CD8-positive, alpha-beta T cell (primary cell): ENCODE measurements at regions of chr1 and their contacts with region 1.

Region 1: DNA sequence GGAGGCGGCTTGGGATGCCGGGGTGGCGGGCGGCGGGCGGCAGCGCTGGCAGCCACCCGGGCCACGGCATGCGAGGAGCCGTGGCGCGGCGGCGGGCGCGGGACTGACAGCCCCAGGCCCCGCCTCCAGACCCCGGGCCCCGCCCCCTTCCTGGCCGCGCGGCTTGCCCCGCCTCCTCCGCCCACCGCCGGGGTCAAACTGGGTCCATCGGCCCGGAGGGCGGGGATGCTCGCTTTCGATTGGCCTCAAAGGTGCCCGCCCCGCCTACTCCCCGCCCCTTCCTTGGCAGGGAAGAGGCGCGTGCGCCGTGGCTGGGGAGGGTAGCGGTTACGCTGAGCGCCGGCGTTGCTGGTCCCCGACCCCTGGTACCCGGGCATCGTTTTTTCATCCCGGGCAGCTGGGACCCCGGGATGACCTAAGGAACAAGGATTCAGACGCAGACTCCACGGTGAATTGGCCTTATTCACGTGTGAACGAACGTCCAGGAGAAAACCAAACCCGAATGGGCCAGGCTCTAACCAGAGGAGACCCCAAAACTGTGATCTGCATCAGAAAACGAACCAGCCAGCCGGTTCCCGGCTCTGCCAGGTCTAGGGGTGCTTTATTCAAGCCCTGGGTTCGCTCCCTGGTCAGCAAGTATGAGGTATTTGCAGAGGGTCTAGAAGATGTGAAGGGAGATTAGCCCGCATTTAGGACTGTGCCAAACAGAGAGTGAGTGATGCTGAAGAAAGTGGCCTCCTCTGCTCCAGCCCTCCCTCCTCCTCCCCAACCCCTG is 117.2 kb upstream of the GUCA2B start:
- DNase-seq: peak; percentile 96 to 99 (median 98)
- ATAC-seq: peak; percentile 94
- H3K4me3 ChIP-seq: peak overlapping the region; percentile 55 to 79
- H3K4me3 Mint-ChIP-seq: peak overlapping the region; percentile 78
- H3K27ac ChIP-seq: peak overlapping the region in 1 of 2 experiments; percentile 51
- H3K27ac Mint-ChIP-seq: peak overlapping the region; percentile 75
- H3K4me1 ChIP-seq: peaks cover 29% of the 10 kb centered on the region
- H3K4me1 Mint-ChIP-seq: peaks cover 42% of the 10 kb centered on the region
- H3K27me3 ChIP-seq: no peaks in the 10 kb centered on the region
- H3K27me3 Mint-ChIP-seq: no peaks in the 10 kb centered on the region
- CTCF ChIP-seq: no peak

Region 2: DNA sequence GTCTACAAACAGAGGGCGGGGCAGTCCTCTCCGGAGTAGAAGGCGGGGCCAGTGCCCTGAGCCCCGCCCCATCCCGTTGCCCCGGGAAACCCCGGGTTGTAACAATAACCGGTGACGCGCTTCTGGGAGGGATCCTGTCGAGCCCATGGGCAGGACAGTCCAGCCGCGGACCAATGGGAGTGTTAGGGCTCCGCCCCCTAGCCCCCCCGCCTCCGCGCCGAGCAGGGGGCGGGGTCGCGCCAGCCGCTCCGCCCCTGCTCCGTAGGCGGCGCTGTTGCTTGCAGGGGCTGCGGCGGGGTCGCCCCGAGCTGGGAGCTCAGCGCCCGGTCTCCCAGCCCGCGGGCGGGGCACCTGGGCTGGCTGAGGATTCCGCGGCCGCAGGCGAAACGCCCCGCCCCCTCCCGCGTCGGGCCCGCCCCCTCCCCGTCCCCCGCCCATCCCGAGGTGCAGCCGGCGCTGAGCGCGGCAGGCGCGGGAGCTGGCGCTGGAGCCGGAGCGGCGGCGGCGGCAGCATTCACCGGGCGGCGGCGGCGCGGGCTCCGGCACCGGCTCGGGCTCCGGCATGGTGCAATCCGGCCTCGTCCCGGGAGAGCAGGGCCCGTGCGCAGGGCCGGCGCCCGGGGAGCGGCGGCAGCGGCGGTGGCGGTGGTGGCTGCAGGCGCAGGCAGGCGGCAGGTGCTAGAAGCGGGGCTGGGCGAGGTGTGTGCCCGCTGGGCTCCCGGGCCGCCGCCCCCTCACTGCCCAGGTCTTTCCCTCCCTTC is 674.8 kb before region 1 on chr1 and contains the start of gene FOXO6:
- CTCF ChIA-PET with region 1: no interaction called
- POLR2A ChIA-PET with region 1: no interaction called
- intact Hi-C with region 1: loop called in 1 of 2 experiments (anchors 2 kb)
- DNase-seq: peak; percentile 85 to 97 (median 94)
- ATAC-seq: peak; percentile 90
- H3K4me3 ChIP-seq: peak within 1 kb of the TSS; percentile 35 to 52
- H3K4me3 Mint-ChIP-seq: peak within 1 kb of the TSS; percentile 82
- H3K27ac ChIP-seq: peak within 1 kb of the TSS; percentile 14 to 25
- H3K27ac Mint-ChIP-seq: peak within 1 kb of the TSS; percentile 28
- H3K4me1 ChIP-seq: peaks cover 22% of the 10 kb centered on the region
- H3K4me1 Mint-ChIP-seq: peaks cover 23% of the 10 kb centered on the region
- H3K27me3 ChIP-seq: peaks cover 10 to 11% of the 10 kb centered on the region in 2 experiments
- H3K27me3 Mint-ChIP-seq: peaks cover 29% of the 10 kb centered on the region
- CTCF ChIP-seq: no peak
- total RNA-seq, gene FOXO6: 1.4 to 1.7 TPM

Region 3: GRCh38 chr1:41673378-41673777 is 362.6 kb before region 1 on chr1:
- CTCF ChIA-PET with region 1: no interaction called
- POLR2A ChIA-PET with region 1: no interaction called
- intact Hi-C with region 1: loop called in 1 of 2 experiments (anchors 5 kb)
- DNase-seq: peak; percentile 22 to 86 (median 55)
- ATAC-seq: peak; percentile 88
- H3K4me3 ChIP-seq: peak overlapping the region; percentile 2 to 30
- H3K4me3 Mint-ChIP-seq: peak overlapping the region; percentile 70
- H3K27ac ChIP-seq: peak overlapping the region; percentile 22 to 62
- H3K27ac Mint-ChIP-seq: peak overlapping the region; percentile 66
- H3K4me1 ChIP-seq: peaks cover 43% of the 10 kb centered on the region
- H3K4me1 Mint-ChIP-seq: peaks cover 66% of the 10 kb centered on the region
- H3K27me3 ChIP-seq: no peaks in the 10 kb centered on the region
- H3K27me3 Mint-ChIP-seq: no peaks in the 10 kb centered on the region
- CTCF ChIP-seq: no peak

Region 4: GRCh38 chr1:41919764-41920397 is 116.1 kb before region 1 on chr1:
- CTCF ChIA-PET with region 1: no interaction called
- POLR2A ChIA-PET with region 1: interaction called, 4 read pairs
- intact Hi-C with region 1: loop called (anchors 1 to 2 kb)
- DNase-seq: peak; percentile 39 to 90 (median 77)
- ATAC-seq: peak; percentile 81
- H3K4me3 ChIP-seq: peak overlapping the region; percentile 51 to 57
- H3K4me3 Mint-ChIP-seq: peak overlapping the region; percentile 95
- H3K27ac ChIP-seq: peak overlapping the region; percentile 56 to 74
- H3K27ac Mint-ChIP-seq: peak overlapping the region; percentile 98
- H3K4me1 ChIP-seq: peaks cover 43% of the 10 kb centered on the region
- H3K4me1 Mint-ChIP-seq: peaks cover 58% of the 10 kb centered on the region
- H3K27me3 ChIP-seq: no peaks in the 10 kb centered on the region
- H3K27me3 Mint-ChIP-seq: no peaks in the 10 kb centered on the region
- CTCF ChIP-seq: no peak

Region 5: GRCh38 chr1:42681741-42682483 is 645.9 kb after region 1 on chr1 and contains the start of gene YBX1:
- CTCF ChIA-PET with region 1: no interaction called
- POLR2A ChIA-PET with region 1: no interaction called
- intact Hi-C with region 1: loop called in 1 of 2 experiments (anchors 10 kb)
- DNase-seq: peak; percentile 88 to 98 (median 95)
- ATAC-seq: peak; percentile 89
- H3K4me3 ChIP-seq: peak within 1 kb of the TSS; percentile 81 to 84
- H3K4me3 Mint-ChIP-seq: peak within 1 kb of the TSS; percentile 99
- H3K27ac ChIP-seq: peak within 1 kb of the TSS; percentile 82 to 88
- H3K27ac Mint-ChIP-seq: peak within 1 kb of the TSS; percentile 97
- H3K4me1 ChIP-seq: peaks cover 43% of the 10 kb centered on the region
- H3K4me1 Mint-ChIP-seq: peaks cover 58% of the 10 kb centered on the region
- H3K27me3 ChIP-seq: no peaks in the 10 kb centered on the region
- H3K27me3 Mint-ChIP-seq: no peaks in the 10 kb centered on the region
- CTCF ChIP-seq: no peak
- total RNA-seq, gene YBX1: 440 to 450 TPM

Region 6: GRCh38 chr1:42931108-42931539 is 895.1 kb after region 1 on chr1:
- CTCF ChIA-PET with region 1: no interaction called
- POLR2A ChIA-PET with region 1: no interaction called
- intact Hi-C with region 1: loop called in 1 of 2 experiments (anchors 10 kb)
- DNase-seq: peak in 7 of 9 experiments; percentile 46 to 89 (median 67)
- ATAC-seq: peak; percentile 49
- H3K4me3 ChIP-seq: peak overlapping the region; percentile 22 to 43
- H3K4me3 Mint-ChIP-seq: peak overlapping the region; percentile 70
- H3K27ac ChIP-seq: peak overlapping the region; percentile 63 to 90
- H3K27ac Mint-ChIP-seq: peak overlapping the region; percentile 95
- H3K4me1 ChIP-seq: peaks cover 67% of the 10 kb centered on the region
- H3K4me1 Mint-ChIP-seq: peaks cover 67% of the 10 kb centered on the region
- H3K27me3 ChIP-seq: no peaks in the 10 kb centered on the region
- H3K27me3 Mint-ChIP-seq: no peaks in the 10 kb centered on the region
- CTCF ChIP-seq: peak; percentile 57